ENCODE measurements at regions of chr3 and their contacts with region 1.

Region 1: DNA sequence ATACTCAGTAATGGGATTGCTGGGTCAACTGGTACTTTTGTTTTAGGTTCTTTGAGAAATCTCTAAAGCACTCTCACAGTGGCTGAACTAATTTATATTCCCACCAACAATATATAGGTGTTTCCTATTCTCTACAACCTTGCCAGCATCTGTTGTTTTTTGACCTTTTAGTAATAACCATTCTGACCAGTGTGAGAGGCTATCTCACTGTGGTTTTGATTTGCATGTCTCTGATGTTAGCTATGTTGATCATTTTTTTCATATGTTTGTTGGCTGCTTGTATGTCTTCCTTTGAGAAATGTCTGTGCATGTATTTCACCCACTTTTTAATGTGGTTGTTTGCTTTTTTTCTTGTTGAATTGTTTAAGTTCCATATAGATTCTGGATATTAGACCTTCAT is 98.2 kb upstream of the DCBLD2 start:
- DNase-seq: no peak
- H3K4me3 ChIP-seq: no peak overlapping the region
- H3K27ac ChIP-seq: no peak overlapping the region
- H3K4me1 ChIP-seq: no peaks in the 10 kb centered on the region
- H3K27me3 ChIP-seq: no peaks in the 10 kb centered on the region
- CTCF ChIP-seq: no peak
- POLR2A ChIP-seq: no peak

Region 2: GRCh38 chr3:98180319-98180890 is 819.3 kb before region 1 on chr3:
- intact Hi-C with region 1: no loop called
- DNase-seq: no peak
- H3K4me3 ChIP-seq: no peak overlapping the region
- H3K27ac ChIP-seq: no peak overlapping the region
- H3K4me1 ChIP-seq: no peaks in the 10 kb centered on the region
- H3K27me3 ChIP-seq: no peaks in the 10 kb centered on the region
- CTCF ChIP-seq: no peak
- POLR2A ChIP-seq: no peak

Region 3: GRCh38 chr3:98602078-98602678 is 397.5 kb before region 1 on chr3:
- intact Hi-C with region 1: loop called (anchors 5 kb)
- DNase-seq: peak; percentile 26 to 38
- H3K4me3 ChIP-seq: no peak overlapping the region
- H3K27ac ChIP-seq: no peak overlapping the region
- H3K4me1 ChIP-seq: peaks cover 0 to 8% of the 10 kb centered on the region in 2 donors
- H3K27me3 ChIP-seq: no peaks in the 10 kb centered on the region
- CTCF ChIP-seq: peak; percentile 23 to 82 (median 66)
- POLR2A ChIP-seq: no peak

Region 4: DNA sequence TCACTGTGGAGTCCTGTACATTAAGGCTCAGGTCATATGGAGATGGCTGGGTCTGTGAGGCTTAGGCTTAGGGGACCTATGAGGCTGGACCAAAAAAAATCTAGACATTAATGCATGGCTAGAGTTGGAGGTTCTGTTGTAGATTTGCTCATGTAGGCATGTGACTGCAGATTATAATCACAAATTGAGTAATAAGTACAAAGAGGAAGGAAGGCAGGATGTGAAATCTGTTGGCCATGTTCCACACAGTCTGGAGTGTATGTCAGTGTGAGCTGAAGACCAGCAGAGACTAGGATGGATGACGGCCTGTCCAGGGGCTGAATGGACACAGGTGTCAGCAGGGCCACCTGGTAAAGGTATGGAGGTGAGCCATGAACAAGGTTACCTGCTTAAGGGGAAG is 236.6 kb before region 1 on chr3 and contains the start of gene ST3GAL6:
- intact Hi-C with region 1: no loop called
- DNase-seq: peak; percentile 38 to 42
- H3K4me3 ChIP-seq: no peak within 1 kb of the TSS
- H3K27ac ChIP-seq: peak within 1 kb of the TSS; percentile 45 to 83 (median 69)
- H3K4me1 ChIP-seq: peaks cover 46 to 48% of the 10 kb centered on the region in 2 donors
- H3K27me3 ChIP-seq: no peaks in the 10 kb centered on the region
- CTCF ChIP-seq: no peak
- POLR2A ChIP-seq: peak in 1 of 2 donors; percentile 7
- total RNA-seq, gene ST3GAL6: 7.4 to 14.5 (median 9.9) TPM

Measured in thyroid gland (tissue), 4 donors.